CD14-positive monocyte (primary cell): ENCODE measurements at regions of chr2 and their contacts with region 1.

Region 1: DNA sequence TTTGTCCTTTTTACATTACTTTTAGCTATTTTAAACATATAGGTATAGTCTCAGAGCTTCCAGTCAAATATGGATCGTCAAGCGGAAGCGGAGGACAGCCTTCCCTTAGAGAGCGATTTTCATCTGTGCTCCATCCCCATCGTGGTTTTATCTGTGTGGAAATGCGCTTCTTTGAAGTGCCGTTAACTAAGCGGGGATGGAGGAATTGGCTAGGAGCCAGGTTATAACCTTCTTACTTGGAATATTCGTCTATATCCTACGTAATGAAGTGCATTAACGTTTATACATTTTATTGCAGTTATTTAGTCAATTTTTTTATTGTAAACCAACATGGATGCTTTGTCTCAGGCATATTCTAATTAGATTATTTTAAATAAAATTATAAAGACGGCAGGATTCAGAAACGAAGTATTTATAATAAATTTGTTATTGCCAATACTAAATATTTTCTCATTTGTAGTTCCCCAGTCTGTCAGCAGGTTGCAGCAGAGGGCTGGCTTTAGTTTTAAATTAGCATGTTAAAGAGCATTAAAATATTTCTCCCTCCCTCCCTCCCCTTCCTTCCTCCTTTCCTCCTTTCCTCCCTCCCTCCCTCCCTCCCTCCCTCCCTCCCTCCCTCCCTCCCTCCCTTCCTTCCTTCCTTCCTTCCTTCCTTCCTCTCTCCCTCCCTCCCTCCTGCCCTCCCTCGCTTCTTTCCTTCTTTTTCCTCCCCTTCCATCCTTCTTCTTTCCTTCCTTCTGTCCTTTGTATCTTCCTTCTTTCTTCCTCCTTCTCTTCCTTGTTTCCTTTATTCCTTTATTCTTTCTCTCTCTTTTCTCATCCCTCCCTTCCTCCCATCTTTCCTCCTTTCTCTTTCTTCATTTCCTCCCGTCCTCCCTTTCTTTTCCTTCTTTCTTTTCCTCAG is 80.6 kb upstream of the DOCK10 start:
- DNase-seq: no peak
- H3K4me3 ChIP-seq: no peak overlapping the region
- H3K4me3 Mint-ChIP-seq: no peak overlapping the region
- H3K27ac ChIP-seq: no peak overlapping the region
- H3K27ac Mint-ChIP-seq: no peak overlapping the region
- H3K4me1 ChIP-seq: no peaks in the 10 kb centered on the region
- H3K4me1 Mint-ChIP-seq: no peaks in the 10 kb centered on the region
- H3K27me3 ChIP-seq: no peaks in the 10 kb centered on the region
- H3K27me3 Mint-ChIP-seq: peaks cover 1 to 9% (median 2%) of the 10 kb centered on the region in 3 donors
- CTCF ChIP-seq: peak; percentile 62

Region 2: DNA sequence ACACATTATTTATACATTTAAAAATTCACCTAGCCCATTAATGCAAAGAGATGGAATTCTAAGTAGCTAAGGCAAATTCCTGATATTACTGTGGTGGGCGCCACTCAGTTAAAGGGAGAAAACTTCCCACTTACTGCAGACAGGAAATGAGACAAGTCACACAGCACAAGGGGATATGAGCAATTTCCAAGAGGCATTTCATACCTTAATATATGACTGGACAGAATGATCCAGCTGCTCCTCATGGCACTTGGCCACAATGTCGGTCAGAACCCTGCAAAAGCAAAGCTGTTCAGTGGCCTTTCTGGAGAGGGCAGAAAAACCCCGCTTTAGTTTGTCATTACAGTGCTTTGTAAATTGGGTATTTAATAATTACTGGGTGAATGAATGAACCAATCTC is 285.3 kb before region 1 on chr2:
- intact Hi-C with region 1: no loop called
- DNase-seq: no peak
- H3K4me3 ChIP-seq: no peak overlapping the region
- H3K4me3 Mint-ChIP-seq: no peak overlapping the region
- H3K27ac ChIP-seq: no peak overlapping the region
- H3K27ac Mint-ChIP-seq: peak overlapping the region in 1 of 7 donors; percentile 3
- H3K4me1 ChIP-seq: no peaks in the 10 kb centered on the region
- H3K4me1 Mint-ChIP-seq: no peaks in the 10 kb centered on the region
- H3K27me3 ChIP-seq: no peaks in the 10 kb centered on the region
- H3K27me3 Mint-ChIP-seq: no peaks in the 10 kb centered on the region
- CTCF ChIP-seq: no peak

Region 3: GRCh38 chr2:225025917-225026571 is 96.8 kb before region 1 on chr2:
- intact Hi-C with region 1: no loop called
- DNase-seq: peak; percentile 72 to 92 (median 79)
- H3K4me3 ChIP-seq: peak overlapping the region in 2 of 3 experiments; percentile 12 to 52
- H3K4me3 Mint-ChIP-seq: peak overlapping the region; percentile 39 to 76
- H3K27ac ChIP-seq: peak overlapping the region; percentile 24 to 87
- H3K27ac Mint-ChIP-seq: peak overlapping the region; percentile 73 to 95 (median 91)
- H3K4me1 ChIP-seq: peaks cover 51 to 63% of the 10 kb centered on the region in 2 donors
- H3K4me1 Mint-ChIP-seq: peaks cover 62% of the 10 kb centered on the region
- H3K27me3 ChIP-seq: no peaks in the 10 kb centered on the region
- H3K27me3 Mint-ChIP-seq: no peaks in the 10 kb centered on the region
- CTCF ChIP-seq: no peak

Region 4: GRCh38 chr2:225041851-225042799 is 80.7 kb before region 1 on chr2 and contains the start of gene DOCK10:
- intact Hi-C with region 1: no loop called
- DNase-seq: peak; percentile 36 to 63 (median 55)
- H3K4me3 ChIP-seq: peak within 1 kb of the TSS; percentile 79 to 92 (median 86)
- H3K4me3 Mint-ChIP-seq: peak within 1 kb of the TSS; percentile 99
- H3K27ac ChIP-seq: peak within 1 kb of the TSS; percentile 66 to 79
- H3K27ac Mint-ChIP-seq: peak within 1 kb of the TSS; percentile 78 to 97 (median 88)
- H3K4me1 ChIP-seq: peaks cover 25 to 32% of the 10 kb centered on the region in 2 donors
- H3K4me1 Mint-ChIP-seq: peaks cover 42% of the 10 kb centered on the region
- H3K27me3 ChIP-seq: peaks cover 0 to 7% of the 10 kb centered on the region in 2 donors
- H3K27me3 Mint-ChIP-seq: peaks cover 4 to 9% (median 5%) of the 10 kb centered on the region in 3 donors
- CTCF ChIP-seq: no peak
- polyA plus RNA-seq, gene DOCK10: 9.5 to 30.9 (median 16.5) TPM

Region 5: DNA sequence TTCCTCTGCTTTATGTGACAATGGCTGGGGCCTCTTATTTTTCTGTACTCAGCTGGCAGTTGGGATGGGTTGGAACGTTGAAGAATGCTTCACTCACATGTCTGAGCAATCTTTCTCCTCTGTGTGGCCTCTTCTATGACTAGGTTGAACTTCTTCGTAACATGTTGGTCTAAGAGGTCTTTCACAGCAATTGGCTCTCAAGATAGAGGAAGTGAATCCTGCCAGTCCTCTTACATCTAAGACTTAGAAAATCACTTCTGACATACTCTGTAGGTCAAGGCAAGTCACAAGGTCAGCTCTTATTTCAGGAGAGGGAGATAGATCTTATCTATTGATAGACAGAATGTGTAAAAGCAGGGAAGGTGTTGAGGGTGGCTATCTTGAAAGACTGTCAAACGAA is 450.8 kb after region 1 on chr2:
- intact Hi-C with region 1: no loop called
- DNase-seq: no peak
- H3K4me3 ChIP-seq: no peak overlapping the region
- H3K4me3 Mint-ChIP-seq: no peak overlapping the region
- H3K27ac ChIP-seq: no peak overlapping the region
- H3K27ac Mint-ChIP-seq: no peak overlapping the region
- H3K4me1 ChIP-seq: no peaks in the 10 kb centered on the region
- H3K4me1 Mint-ChIP-seq: no peaks in the 10 kb centered on the region
- H3K27me3 ChIP-seq: no peaks in the 10 kb centered on the region
- H3K27me3 Mint-ChIP-seq: no peaks in the 10 kb centered on the region
- CTCF ChIP-seq: no peak

Region 6: DNA sequence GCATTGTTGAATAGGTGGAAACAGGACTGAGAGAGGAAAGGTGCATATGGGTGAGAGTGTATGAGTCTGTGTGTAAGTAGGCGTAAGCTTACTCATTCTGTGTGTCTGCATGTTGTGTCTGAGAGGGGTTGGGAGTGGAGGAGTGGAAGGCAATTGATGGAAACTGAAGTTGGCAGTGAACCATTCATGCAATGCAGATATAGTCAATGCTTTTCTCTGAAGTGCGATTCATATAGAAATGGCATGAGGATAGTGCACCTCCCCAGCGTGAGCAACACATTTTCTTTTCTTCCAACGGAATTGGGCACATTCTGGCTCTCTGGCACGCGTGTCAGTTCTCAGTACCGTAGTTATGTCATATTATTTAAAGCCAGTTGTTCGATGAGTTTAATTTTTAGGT is 527.2 kb after region 1 on chr2:
- intact Hi-C with region 1: loop called (anchors 10 kb)
- DNase-seq: no peak
- H3K4me3 ChIP-seq: no peak overlapping the region
- H3K4me3 Mint-ChIP-seq: no peak overlapping the region
- H3K27ac ChIP-seq: no peak overlapping the region
- H3K27ac Mint-ChIP-seq: no peak overlapping the region
- H3K4me1 ChIP-seq: no peaks in the 10 kb centered on the region
- H3K4me1 Mint-ChIP-seq: no peaks in the 10 kb centered on the region
- H3K27me3 ChIP-seq: no peaks in the 10 kb centered on the region
- H3K27me3 Mint-ChIP-seq: peaks cover 0 to 3% (median 3%) of the 10 kb centered on the region in 3 donors
- CTCF ChIP-seq: no peak